Breast epithelium (tissue), 4 donors: ENCODE measurements at regions of chr16 and their contacts with region 1.

Region 1: GRCh38 chr16:54397190-54397835 is 110.7 kb upstream of the IRX3 start:
- DNase-seq: no peak
- H3K4me3 ChIP-seq: no peak overlapping the region
- H3K27ac ChIP-seq: no peak overlapping the region
- H3K4me1 ChIP-seq: no peaks in the 10 kb centered on the region
- H3K27me3 ChIP-seq: no peaks in the 10 kb centered on the region
- CTCF ChIP-seq: no peak
- POLR2A ChIP-seq: no peak

Region 2: DNA sequence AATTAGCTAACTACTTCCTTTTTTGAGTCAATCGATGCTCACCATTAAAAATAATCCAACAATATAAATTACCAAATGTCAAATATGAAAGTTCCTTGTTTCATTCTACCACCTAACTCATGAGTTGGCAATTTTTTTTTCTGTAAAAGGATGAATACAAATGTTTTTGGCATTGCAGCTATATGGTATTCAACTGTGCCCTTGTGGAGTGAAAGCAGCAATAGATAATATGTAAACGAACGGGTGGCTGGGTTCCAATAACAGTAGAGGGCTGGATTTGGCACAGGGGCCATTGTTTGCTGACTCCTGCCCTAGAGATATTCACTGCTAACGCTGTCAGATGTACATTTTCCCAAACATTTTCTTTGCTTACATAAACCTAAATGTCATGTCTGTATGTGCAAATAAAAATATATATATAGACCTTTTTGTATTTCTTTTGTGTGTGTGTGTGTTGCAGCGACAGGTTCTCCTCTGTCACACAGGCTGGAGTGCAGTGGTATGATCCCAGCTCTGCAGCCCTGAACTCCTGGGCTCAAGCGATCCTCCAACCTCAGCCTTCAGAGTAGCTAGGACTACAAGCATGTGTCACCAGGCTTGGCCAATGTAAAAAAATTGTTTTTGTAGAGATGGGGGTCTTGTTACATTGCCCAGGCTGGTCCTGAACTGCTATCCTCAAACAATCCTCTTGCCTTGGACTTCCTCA is 767.6 kb before region 1 on chr16:
- intact Hi-C with region 1: loop called (anchors 10 kb)
- DNase-seq: no peak
- H3K4me3 ChIP-seq: no peak overlapping the region
- H3K27ac ChIP-seq: no peak overlapping the region
- H3K4me1 ChIP-seq: no peaks in the 10 kb centered on the region
- H3K27me3 ChIP-seq: no peaks in the 10 kb centered on the region
- CTCF ChIP-seq: no peak
- POLR2A ChIP-seq: no peak